ENCODE measurements at regions of chr11 and their contacts with region 1.

Region 1: GRCh38 chr11:92870196-92870832 is 99.1 kb upstream of the MTNR1B start:
- DNase-seq: no peak
- ATAC-seq: peak; percentile 37

Region 2: GRCh38 chr11:92775003-92775676 is 95.2 kb before region 1 on chr11:
- intact Hi-C with region 1: loop called (anchors 10 kb)
- DNase-seq: no peak
- ATAC-seq: no peak